Caco-2 (cell line): ENCODE measurements at regions of chr13 and their contacts with region 1.

Region 1: DNA sequence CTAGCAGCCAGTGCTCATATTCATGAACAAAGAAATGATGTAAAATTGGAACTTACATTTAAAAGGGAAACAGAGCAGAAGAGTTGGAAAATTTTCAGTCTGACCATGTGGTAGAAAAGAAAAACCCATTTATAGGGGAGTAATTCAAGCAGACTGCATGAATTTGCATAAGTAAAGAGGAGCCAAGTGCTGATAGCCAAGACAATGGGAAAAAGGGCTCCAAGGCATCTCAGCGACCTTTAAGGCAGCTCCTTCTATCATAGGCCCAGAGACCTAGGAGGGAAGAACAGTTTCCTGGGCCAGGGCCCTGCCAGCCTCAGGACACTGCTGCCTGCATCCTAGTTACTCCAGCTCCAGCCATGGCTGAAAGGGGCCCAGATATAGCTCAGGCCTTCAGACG is 7.5 kb downstream of the DNAJC3 start:
- DNase-seq: no peak
- H3K4me3 ChIP-seq: no peak overlapping the region
- H3K4me3 Mint-ChIP-seq: no peak overlapping the region
- H3K27ac Mint-ChIP-seq: no peak overlapping the region
- H3K4me1 ChIP-seq: peaks cover 7% of the 10 kb centered on the region; the same call in 1 of the 2 replicates
- H3K4me1 Mint-ChIP-seq: peaks cover 17% of the 10 kb centered on the region
- H3K27me3 ChIP-seq: no peaks in the 10 kb centered on the region; the same call in 1 of the 2 replicates
- H3K27me3 Mint-ChIP-seq: no peaks in the 10 kb centered on the region
- CTCF ChIP-seq: no peak

Region 2: DNA sequence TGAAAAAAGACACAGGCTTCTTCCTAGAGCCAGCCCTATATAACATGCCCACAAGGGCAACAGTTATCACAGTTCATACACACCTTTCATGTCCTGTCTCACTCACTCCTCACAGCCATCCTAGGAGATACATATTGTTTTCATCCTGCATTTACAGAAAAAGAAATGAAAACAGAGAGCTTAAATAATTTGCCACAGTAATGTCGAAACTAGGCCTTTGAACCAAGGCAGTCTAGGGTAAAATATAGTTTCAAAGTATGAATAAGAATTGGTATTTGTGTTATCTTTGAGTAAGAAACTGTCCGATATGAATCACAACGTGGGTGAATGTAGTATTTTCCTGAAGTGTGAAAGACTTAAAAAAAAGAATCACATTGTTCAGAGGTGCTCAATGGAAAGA is 105.1 kb before region 1 on chr13:
- CTCF ChIA-PET with region 1: no interaction called
- POLR2A ChIA-PET with region 1: no interaction called
- intact Hi-C with region 1: no loop called
- DNase-seq: no peak
- H3K4me3 ChIP-seq: no peak overlapping the region
- H3K4me3 Mint-ChIP-seq: no peak overlapping the region
- H3K27ac Mint-ChIP-seq: no peak overlapping the region
- H3K4me1 ChIP-seq: no peaks in the 10 kb centered on the region
- H3K4me1 Mint-ChIP-seq: no peaks in the 10 kb centered on the region
- H3K27me3 ChIP-seq: no peaks in the 10 kb centered on the region
- H3K27me3 Mint-ChIP-seq: no peaks in the 10 kb centered on the region
- CTCF ChIP-seq: no peak

Region 3: DNA sequence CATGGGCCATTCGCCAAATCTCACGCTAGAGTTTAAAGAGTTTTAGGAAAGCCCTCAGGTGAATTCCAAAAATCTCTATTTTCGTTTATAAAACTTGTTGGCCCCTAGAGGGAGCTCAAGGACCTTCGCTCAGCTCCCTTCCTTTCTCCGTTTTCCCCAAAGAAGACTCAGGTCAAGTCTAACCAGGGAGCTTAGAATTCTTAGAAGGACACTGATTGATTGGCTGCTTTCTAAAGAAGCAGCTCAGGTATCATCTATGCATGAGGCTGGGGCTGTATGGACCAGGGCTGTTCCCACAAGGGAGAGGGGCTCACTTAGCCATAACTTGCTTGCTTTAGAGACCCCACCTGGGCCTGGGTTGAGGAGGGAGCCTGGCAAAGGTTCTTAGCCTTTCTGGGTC is 60.4 kb before region 1 on chr13:
- CTCF ChIA-PET with region 1: no interaction called
- POLR2A ChIA-PET with region 1: no interaction called
- intact Hi-C with region 1: no loop called
- DNase-seq: peak in 1 of 2 experiments; percentile 68
- H3K4me3 ChIP-seq: no peak overlapping the region
- H3K4me3 Mint-ChIP-seq: no peak overlapping the region
- H3K27ac Mint-ChIP-seq: no peak overlapping the region
- H3K4me1 ChIP-seq: no peaks in the 10 kb centered on the region
- H3K4me1 Mint-ChIP-seq: no peaks in the 10 kb centered on the region
- H3K27me3 ChIP-seq: no peaks in the 10 kb centered on the region
- H3K27me3 Mint-ChIP-seq: no peaks in the 10 kb centered on the region
- CTCF ChIP-seq: peak; percentile 75 to 82

Region 4: DNA sequence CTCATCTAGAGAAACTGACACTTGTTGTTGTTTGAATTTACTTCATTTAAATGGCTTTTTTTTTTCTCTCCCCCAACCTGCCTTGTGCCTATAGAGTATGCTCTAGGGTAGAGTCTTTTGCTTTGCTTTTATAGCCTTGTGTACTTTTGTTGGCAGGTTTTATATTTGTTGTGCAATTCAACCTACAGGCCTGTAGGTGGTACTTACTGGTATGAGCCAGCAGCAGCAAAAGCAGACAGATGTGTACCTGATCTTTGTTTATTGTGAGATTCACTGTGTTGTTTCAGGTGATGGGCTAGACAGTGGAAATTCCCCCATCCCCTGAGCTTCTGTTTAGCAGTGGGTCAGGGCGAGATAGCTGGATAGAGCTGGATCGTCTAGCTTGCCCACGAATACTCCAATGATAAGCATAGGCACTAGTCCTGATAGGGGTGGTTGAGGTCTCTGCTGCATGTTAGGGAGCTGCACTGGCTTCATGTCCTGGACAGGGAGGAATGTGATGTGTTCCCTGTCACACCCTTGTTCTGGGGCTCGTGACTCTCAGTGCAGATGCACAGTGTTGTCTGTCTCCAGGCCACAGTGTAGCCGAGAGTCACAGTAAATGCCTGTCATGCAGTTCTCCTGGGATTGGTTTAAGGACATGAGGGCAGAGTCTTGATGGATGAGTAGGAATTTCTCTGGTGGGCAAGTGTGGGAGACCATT is 13.8 kb after region 1 on chr13:
- CTCF ChIA-PET with region 1: no interaction called
- POLR2A ChIA-PET with region 1: interaction called, 10 read pairs
- intact Hi-C with region 1: no loop called
- DNase-seq: no peak
- H3K4me3 ChIP-seq: no peak overlapping the region
- H3K4me3 Mint-ChIP-seq: no peak overlapping the region
- H3K27ac Mint-ChIP-seq: no peak overlapping the region
- H3K4me1 ChIP-seq: 0 out of 2 replicates have a peak, but pooled peaks cover 6% of the 10 kb centered on the region
- H3K4me1 Mint-ChIP-seq: peaks cover 13% of the 10 kb centered on the region
- H3K27me3 ChIP-seq: no peaks in the 10 kb centered on the region
- H3K27me3 Mint-ChIP-seq: no peaks in the 10 kb centered on the region
- CTCF ChIP-seq: peak; percentile 23 to 51